ENCODE measurements at regions of chr10 and their contacts with region 1.

Region 1: GRCh38 chr10:47311932-47312662 is 10.2 kb upstream of the GDF2 start:
- DNase-seq: peak; percentile 74
- H3K4me3 Mint-ChIP-seq: no peak overlapping the region
- H3K27ac Mint-ChIP-seq: peak overlapping the region; percentile 33
- H3K4me1 Mint-ChIP-seq: peaks cover 16% of the 10 kb centered on the region
- H3K27me3 Mint-ChIP-seq: no peaks in the 10 kb centered on the region

Region 2: DNA sequence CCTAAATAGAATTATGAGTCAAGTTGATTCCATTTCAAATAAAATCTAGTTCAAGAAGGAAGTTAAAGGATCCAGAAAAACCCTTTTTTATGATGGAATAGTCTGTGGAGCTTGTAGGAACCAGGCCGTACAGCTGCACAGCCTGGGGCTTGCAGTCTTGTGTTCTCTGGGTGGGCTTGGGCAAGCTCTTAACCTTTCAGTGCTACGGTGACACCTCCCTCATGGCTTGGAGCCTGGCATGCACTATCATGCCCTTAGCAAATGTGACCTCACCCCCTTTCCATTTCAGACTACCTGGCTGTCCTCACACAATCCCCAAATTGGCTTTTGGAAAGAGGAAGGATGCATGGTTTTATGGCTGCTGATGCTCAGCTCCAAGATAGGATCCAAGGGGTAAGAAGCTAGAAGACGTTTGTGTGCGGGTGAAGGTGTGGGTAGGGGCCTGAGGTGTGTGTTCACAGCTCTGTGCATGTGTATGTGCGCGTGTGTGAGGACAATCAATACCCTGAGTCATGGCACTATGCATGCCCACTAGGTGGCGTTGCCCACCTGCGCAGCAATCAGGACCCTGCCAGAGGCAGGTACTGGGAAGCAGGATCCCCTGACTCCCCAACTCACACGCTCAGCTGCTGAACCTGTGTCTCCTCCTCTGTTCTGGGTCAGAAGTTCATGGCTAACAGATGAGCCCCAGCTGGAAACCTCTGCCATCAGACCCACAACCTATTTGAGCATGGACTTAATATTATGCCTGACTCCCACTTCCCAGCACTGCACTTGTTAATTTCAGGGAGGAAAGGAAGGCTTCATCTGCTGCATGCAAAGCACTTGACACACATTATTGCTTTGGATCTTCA is 287.5 kb before region 1 on chr10:
- intact Hi-C with region 1: loop called (anchors 1 kb)
- DNase-seq: peak; percentile 53
- H3K4me3 Mint-ChIP-seq: no peak overlapping the region
- H3K27ac Mint-ChIP-seq: no peak overlapping the region
- H3K4me1 Mint-ChIP-seq: peaks cover 16% of the 10 kb centered on the region
- H3K27me3 Mint-ChIP-seq: no peaks in the 10 kb centered on the region

Region 3: DNA sequence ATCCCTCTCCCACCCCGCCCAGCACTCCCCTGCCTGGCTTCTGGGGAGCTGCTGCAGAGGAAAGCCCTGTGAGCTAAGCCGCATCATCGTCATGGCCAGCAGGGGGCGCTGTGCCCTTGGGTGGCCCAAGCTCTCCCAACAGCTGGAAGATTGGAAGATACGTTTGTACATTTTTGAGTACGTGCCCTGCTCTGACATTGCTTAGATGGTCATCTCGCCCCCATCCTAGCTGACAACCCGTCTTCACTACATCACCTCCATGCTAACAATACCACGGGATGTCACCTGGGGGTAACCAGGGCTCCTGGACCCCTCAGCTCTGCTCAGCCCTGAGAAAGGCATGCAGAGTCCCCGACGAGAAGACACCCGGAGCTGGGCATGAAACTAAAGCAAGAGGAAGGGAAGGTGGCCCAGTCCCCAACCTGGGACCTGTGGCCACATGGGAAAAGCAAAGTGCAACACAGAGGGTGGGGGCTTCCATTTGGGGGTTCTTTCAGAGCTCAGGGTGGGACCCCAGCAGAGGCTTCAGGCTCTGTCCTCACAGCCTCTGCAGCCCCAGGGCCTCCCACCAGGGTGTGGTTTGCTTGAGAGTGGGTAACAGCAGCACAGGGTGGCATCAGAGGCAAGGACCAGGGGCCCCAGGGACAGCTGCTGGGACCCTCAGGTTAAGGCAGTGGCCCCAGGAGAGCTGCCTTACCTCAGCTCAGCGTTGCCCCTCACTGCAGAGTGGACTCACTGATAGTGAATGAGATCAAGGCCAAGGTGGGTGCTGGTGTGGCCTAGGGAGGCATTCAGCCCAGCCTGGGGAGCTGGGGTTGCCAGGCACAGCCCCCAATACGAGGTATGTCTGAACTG is 264.2 kb before region 1 on chr10:
- intact Hi-C with region 1: loop called (anchors 1 kb)
- DNase-seq: peak; percentile 65
- H3K4me3 Mint-ChIP-seq: no peak overlapping the region
- H3K27ac Mint-ChIP-seq: no peak overlapping the region
- H3K4me1 Mint-ChIP-seq: peaks cover 16% of the 10 kb centered on the region
- H3K27me3 Mint-ChIP-seq: no peaks in the 10 kb centered on the region

Region 4: GRCh38 chr10:47176903-47177868 is 134.9 kb before region 1 on chr10:
- intact Hi-C with region 1: loop called (anchors 10 kb)
- DNase-seq: no peak
- H3K4me3 Mint-ChIP-seq: no peak overlapping the region
- H3K27ac Mint-ChIP-seq: no peak overlapping the region
- H3K4me1 Mint-ChIP-seq: peaks cover 6% of the 10 kb centered on the region
- H3K27me3 Mint-ChIP-seq: peaks cover 7% of the 10 kb centered on the region

Region 5: DNA sequence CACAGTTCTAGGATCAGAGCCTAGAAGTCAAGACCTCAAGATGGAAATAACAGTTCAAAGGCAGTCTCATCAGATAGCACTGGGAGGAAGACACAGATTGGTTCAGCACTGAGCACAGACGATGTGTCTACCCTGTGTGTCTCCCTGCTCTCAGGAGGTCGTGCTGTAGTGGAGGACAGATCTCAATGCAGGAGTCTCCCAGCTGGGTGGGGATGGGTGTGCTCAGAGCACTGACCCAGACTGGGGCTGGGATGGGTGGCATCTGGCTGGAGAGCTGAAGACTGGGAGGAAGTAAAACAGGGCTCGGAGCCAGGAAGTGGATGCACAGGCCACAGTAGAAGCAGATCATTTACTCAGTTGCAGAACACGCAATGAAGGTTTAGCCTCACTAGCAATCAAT is 81.6 kb before region 1 on chr10:
- intact Hi-C with region 1: no loop called
- DNase-seq: no peak
- H3K4me3 Mint-ChIP-seq: no peak overlapping the region
- H3K27ac Mint-ChIP-seq: no peak overlapping the region
- H3K4me1 Mint-ChIP-seq: peaks cover 7% of the 10 kb centered on the region
- H3K27me3 Mint-ChIP-seq: no peaks in the 10 kb centered on the region

Region 6: GRCh38 chr10:47261121-47261520 is 51.0 kb before region 1 on chr10:
- intact Hi-C with region 1: loop called (anchors 5 kb)
- DNase-seq: peak; percentile 9
- H3K4me3 Mint-ChIP-seq: no peak overlapping the region
- H3K27ac Mint-ChIP-seq: peak overlapping the region; percentile 89
- H3K4me1 Mint-ChIP-seq: peaks cover 75% of the 10 kb centered on the region
- H3K27me3 Mint-ChIP-seq: no peaks in the 10 kb centered on the region

Region 7: GRCh38 chr10:47277352-47278151 is 34.5 kb before region 1 on chr10:
- intact Hi-C with region 1: no loop called
- DNase-seq: peak; percentile 26
- H3K4me3 Mint-ChIP-seq: no peak overlapping the region
- H3K27ac Mint-ChIP-seq: no peak overlapping the region
- H3K4me1 Mint-ChIP-seq: peaks cover 18% of the 10 kb centered on the region
- H3K27me3 Mint-ChIP-seq: peaks cover 3% of the 10 kb centered on the region

Measured in activated T-helper 2 cell treated with anti-CD3 and anti-CD28 coated beads, Interferon-gamma antibody, Interleukin-2, Interleukin-4, amounts not matched to agents 10 μg/mL and 5 μg/mL and 100 μg/mL, durations not matched to agents 14 hours and 24 hours and 36 hours (primary cell).